SK-N-SH (cell line): ENCODE measurements at regions of chr3 and their contacts with region 1.

Region 1: DNA sequence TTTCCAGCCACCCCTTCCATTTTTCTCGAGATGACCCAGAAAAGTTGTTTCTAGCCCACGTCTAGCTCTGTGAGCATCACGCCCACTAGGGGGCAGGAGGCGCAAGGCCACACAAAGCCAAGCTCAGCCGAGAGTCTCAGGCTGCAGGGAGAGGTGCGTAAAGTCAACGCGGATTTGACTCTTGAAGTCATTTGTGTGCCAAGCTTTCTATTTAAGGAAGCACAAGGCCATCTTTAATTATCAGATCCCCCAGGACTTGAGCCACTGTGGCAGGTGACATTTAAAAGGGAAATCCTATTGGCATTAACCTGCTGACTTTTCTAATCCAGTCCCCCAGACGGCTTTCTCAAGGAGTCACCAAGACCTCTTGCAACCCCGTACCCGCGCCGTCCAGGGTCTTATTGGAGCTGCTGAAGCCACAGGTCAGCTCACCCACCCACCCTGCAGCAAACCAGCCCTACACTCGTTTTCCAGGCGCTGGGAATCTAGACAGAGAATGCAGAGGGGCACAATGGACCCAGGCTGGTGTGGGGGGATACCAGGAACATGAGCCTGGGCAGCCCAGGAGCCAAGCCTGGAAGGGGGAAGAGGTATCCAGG is 62.1 kb downstream of the CAPN7 start:
- DNase-seq: peak; percentile 86
- H3K4me3 ChIP-seq: peak overlapping the region in 1 of 2 experiments; percentile 21; a peak in 1 of 4 replicates
- H3K27ac ChIP-seq: no peak overlapping the region; a peak in 1 of 4 replicates
- H3K4me1 ChIP-seq: peaks cover 0 to 20% of the 10 kb centered on the region in 2 experiments; a peak in 3 of 4 replicates
- H3K27me3 ChIP-seq: no peaks in the 10 kb centered on the region
- CTCF ChIP-seq: peak; percentile 97
- EP300 ChIP-seq: no peak
- RAD21 ChIP-seq: peak; percentile 99

Region 2: DNA sequence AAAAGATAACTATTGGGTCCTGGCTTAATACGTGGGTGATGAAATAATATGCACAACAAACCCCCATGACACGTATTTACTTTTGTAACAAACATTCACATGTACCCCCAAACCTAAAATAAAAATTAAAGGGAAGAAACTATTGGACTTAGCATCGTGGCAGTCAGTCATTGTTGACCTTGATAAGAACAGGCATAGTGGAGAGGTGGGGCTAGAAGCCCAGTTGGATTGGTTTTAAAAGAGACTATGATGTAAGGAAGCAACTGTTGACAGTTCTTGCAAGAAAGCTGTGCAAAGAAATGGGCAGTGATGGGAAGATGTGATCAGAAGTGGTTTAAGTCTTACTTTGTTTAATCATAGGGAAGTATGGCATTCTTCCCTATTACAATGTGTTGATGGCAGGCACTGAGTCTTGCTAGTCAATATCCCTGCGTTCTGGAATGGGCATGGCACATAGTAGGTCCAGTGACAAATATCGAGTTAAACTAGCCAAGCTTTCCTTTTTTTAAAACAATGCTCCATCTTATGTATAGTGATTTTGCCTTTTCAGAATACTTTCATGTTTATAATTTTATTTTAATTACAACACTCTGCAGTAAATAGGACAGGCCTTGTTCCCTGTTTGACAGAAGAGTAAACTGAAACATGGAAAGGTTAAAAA is 24.2 kb before region 1 on chr3:
- CTCF ChIA-PET with region 1: interaction called, 11 read pairs
- POLR2A ChIA-PET with region 1: no interaction called
- DNase-seq: no peak
- H3K4me3 ChIP-seq: no peak overlapping the region
- H3K27ac ChIP-seq: no peak overlapping the region
- H3K4me1 ChIP-seq: no peaks in the 10 kb centered on the region
- H3K27me3 ChIP-seq: no peaks in the 10 kb centered on the region
- CTCF ChIP-seq: no peak
- EP300 ChIP-seq: no peak
- RAD21 ChIP-seq: no peak

Region 3: DNA sequence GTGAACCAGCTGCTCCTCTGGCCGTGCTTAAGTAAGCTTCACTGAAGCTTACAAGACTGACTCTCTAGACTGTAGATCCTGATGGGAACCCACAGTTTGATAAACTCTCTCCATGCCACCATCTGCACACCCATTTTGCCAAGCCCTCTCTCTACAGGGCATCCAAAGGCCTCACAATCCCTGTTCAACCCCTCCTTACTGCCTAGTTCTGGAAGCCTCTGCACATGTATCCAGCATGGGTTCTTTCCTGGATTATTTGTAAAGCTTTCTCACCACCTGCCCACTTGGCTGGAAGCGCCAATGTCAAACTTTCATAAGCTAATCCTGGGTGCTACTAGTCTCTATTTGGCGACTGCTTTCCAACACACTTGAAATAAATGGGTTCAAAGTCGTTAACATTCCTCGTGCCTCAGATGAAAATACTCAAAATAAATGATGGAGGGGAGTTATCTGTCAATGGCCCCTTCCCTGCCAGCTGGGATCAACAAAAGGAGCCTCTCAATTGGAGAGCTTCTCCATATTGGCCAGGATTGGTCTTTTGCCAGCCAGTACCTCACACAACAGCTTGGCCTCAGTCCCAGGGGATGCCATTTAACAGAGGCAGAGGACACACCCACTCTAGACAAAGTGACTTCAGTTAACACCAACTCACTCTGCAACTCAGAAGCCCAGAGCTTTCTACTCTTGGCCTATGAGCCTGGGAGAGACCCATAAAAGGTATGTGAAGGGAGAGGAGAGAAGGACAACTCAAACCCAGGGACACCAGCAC is 16.2 kb after region 1 on chr3:
- CTCF ChIA-PET with region 1: interaction called, 62 read pairs
- POLR2A ChIA-PET with region 1: no interaction called
- DNase-seq: no peak
- H3K4me3 ChIP-seq: no peak overlapping the region
- H3K27ac ChIP-seq: no peak overlapping the region
- H3K4me1 ChIP-seq: peaks cover 3 to 5% of the 10 kb centered on the region in 2 experiments; a peak in 2 of 4 replicates
- H3K27me3 ChIP-seq: no peaks in the 10 kb centered on the region
- CTCF ChIP-seq: no peak
- EP300 ChIP-seq: no peak
- RAD21 ChIP-seq: no peak

Region 4: DNA sequence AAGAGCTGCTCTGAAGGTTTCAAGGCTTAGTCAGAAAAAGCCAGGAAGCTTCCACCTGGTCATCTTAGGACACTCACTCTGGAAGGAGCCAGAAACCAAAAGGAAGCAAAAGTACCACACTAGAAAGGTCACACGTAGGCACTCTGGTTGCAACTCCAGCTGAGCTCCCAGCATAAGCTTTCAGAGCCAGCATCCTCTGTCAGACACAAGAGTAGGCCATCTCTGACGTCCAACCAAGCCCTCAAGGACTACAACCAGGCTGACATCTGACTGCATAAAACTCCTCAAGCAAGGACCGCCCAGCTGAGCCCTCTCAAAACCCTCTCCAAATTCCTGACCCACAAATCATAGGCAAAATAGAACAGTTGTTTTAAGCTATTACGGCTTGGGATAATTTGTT is 51.4 kb after region 1 on chr3:
- CTCF ChIA-PET with region 1: interaction called, 59 read pairs
- POLR2A ChIA-PET with region 1: no interaction called
- DNase-seq: no peak
- H3K4me3 ChIP-seq: no peak overlapping the region
- H3K27ac ChIP-seq: peak overlapping the region in 1 of 2 experiments; percentile 32; a peak in 2 of 4 replicates
- H3K4me1 ChIP-seq: peaks cover 9 to 36% of the 10 kb centered on the region in 2 experiments; a peak in 2 of 4 replicates
- H3K27me3 ChIP-seq: no peaks in the 10 kb centered on the region
- CTCF ChIP-seq: no peak
- EP300 ChIP-seq: no peak
- RAD21 ChIP-seq: no peak

Region 5: DNA sequence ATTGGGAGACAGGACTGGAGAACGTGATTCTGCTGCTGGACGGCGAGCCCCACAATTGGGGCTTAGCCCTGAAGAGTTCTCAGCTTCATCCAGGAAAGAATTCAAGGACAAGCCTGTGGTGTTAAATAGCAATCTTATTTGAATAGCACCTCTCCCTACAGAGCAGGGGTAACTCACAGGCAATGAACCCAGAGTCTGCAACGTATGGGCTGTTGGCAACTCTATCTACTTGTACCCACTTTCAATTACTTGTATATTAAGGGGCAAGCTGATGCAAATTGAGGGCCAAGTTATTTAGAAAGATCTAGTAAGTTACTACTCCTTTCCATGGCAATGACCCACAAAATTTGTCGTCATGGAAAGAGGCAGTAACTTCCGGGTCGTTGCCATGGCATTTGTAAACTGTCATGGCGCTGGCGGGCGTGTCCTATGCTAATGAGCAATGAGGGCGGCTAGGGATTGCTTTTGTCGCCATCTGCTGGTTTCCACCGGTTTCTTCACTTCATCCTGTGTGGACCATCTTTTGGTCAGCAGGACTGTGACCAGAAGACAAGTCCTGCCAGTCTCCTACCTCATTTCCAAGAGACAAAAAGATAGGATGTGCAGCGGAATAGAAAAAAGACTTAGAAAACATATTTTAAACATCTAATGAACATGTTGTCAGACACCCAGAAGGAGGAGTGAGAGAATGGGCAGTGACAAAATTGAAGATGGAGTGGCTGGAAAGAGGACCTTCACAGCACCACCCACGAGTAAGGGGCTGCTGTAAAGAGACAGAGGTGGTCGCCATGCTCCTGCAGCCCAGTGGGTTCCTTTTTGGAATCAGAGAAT is 110.0 kb after region 1 on chr3:
- CTCF ChIA-PET with region 1: interaction called, 66 read pairs
- POLR2A ChIA-PET with region 1: no interaction called
- DNase-seq: peak; percentile 79
- H3K4me3 ChIP-seq: no peak overlapping the region
- H3K27ac ChIP-seq: peak overlapping the region in 1 of 2 experiments; percentile 62; a peak in 2 of 4 replicates
- H3K4me1 ChIP-seq: peaks cover 0 to 2% of the 10 kb centered on the region in 2 experiments; a peak in 1 of 4 replicates
- H3K27me3 ChIP-seq: no peaks in the 10 kb centered on the region
- CTCF ChIP-seq: peak; percentile 88
- EP300 ChIP-seq: no peak
- RAD21 ChIP-seq: peak; percentile 88

Region 6: GRCh38 chr3:15405448-15406050 is 137.4 kb after region 1 on chr3:
- CTCF ChIA-PET with region 1: interaction called, 85 read pairs
- POLR2A ChIA-PET with region 1: no interaction called
- DNase-seq: peak; percentile 51
- H3K4me3 ChIP-seq: no peak overlapping the region; a peak in 1 of 4 replicates
- H3K27ac ChIP-seq: no peak overlapping the region
- H3K4me1 ChIP-seq: no peaks in the 10 kb centered on the region
- H3K27me3 ChIP-seq: no peaks in the 10 kb centered on the region
- CTCF ChIP-seq: peak; percentile 82
- EP300 ChIP-seq: no peak
- RAD21 ChIP-seq: peak; percentile 65